T-cell (primary cell): ENCODE measurements at regions of chr21 and their contacts with region 1.

Region 1: GRCh38 chr21:41816220-41817165 is 49.6 kb upstream of the RIPK4 start:
- DNase-seq: peak in 32 of 35 experiments; percentile 31 to 73 (median 49)
- ATAC-seq: peak; percentile 58 to 82 (median 77)
- H3K4me3 ChIP-seq: no peak overlapping the region
- H3K4me3 Mint-ChIP-seq: no peak overlapping the region
- H3K27ac ChIP-seq: no peak overlapping the region
- H3K27ac Mint-ChIP-seq: peak overlapping the region in 1 of 2 donors; percentile 30
- H3K4me1 ChIP-seq: no peaks in the 10 kb centered on the region
- H3K4me1 Mint-ChIP-seq: peaks cover 6 to 10% (median 7%) of the 10 kb centered on the region in 3 donors
- H3K27me3 ChIP-seq: no peaks in the 10 kb centered on the region
- H3K27me3 Mint-ChIP-seq: no peaks in the 10 kb centered on the region

Region 2: GRCh38 chr21:41283211-41283818 is 533.2 kb before region 1 on chr21:
- CTCF ChIA-PET with region 1: interaction called in 1 of 2 experiments, 12 read pairs
- POLR2A ChIA-PET with region 1: no interaction called
- DNase-seq: peak in 32 of 35 experiments; percentile 10 to 82 (median 36)
- ATAC-seq: peak; percentile 81 to 94 (median 92)
- H3K4me3 ChIP-seq: no peak overlapping the region
- H3K4me3 Mint-ChIP-seq: no peak overlapping the region
- H3K27ac ChIP-seq: no peak overlapping the region
- H3K27ac Mint-ChIP-seq: peak overlapping the region in 1 of 2 donors; percentile 51
- H3K4me1 ChIP-seq: no peaks in the 10 kb centered on the region
- H3K4me1 Mint-ChIP-seq: no peaks in the 10 kb centered on the region
- H3K27me3 ChIP-seq: peaks cover 6 to 15% of the 10 kb centered on the region in 2 experiments
- H3K27me3 Mint-ChIP-seq: peaks cover 18 to 26% of the 10 kb centered on the region in 2 donors

Region 3: DNA sequence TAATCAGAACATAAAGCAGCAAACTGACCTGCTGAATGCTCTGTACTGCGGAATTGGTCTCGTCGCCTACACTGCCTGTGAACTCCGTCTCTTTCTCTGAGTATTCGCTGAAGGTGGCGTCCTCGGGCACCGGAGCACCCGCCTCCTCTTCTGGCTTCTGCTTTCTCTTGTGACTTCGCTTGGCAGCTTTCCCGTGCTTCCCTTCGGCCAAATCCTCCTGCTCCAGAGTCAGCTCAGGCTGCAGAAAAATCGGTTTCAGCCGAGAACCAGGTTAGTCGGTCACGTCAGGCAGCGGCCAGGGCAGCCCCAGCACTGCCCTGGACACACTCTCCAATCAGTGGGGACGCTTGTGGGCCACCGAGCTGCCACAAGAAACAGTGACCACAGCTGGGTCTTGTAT is 13.8 kb before region 1 on chr21:
- CTCF ChIA-PET with region 1: no interaction called
- POLR2A ChIA-PET with region 1: no interaction called
- DNase-seq: no peak
- ATAC-seq: no peak
- H3K4me3 ChIP-seq: no peak overlapping the region
- H3K4me3 Mint-ChIP-seq: no peak overlapping the region
- H3K27ac ChIP-seq: no peak overlapping the region
- H3K27ac Mint-ChIP-seq: no peak overlapping the region
- H3K4me1 ChIP-seq: no peaks in the 10 kb centered on the region
- H3K4me1 Mint-ChIP-seq: peaks cover 0 to 4% (median 0%) of the 10 kb centered on the region in 3 donors
- H3K27me3 ChIP-seq: no peaks in the 10 kb centered on the region
- H3K27me3 Mint-ChIP-seq: no peaks in the 10 kb centered on the region

Region 4: GRCh38 chr21:41895643-41896493 is 79.4 kb after region 1 on chr21:
- CTCF ChIA-PET with region 1: no interaction called
- POLR2A ChIA-PET with region 1: no interaction called
- DNase-seq: peak in 34 of 35 experiments; percentile 29 to 69 (median 52)
- ATAC-seq: peak; percentile 97 to 99 (median 98)
- H3K4me3 ChIP-seq: no peak overlapping the region
- H3K4me3 Mint-ChIP-seq: peak overlapping the region; percentile 25 to 42 (median 39)
- H3K27ac ChIP-seq: no peak overlapping the region
- H3K27ac Mint-ChIP-seq: peak overlapping the region; percentile 83 to 89
- H3K4me1 ChIP-seq: peaks cover 3 to 19% of the 10 kb centered on the region in 2 experiments
- H3K4me1 Mint-ChIP-seq: peaks cover 20 to 34% (median 31%) of the 10 kb centered on the region in 3 donors
- H3K27me3 ChIP-seq: no peaks in the 10 kb centered on the region
- H3K27me3 Mint-ChIP-seq: no peaks in the 10 kb centered on the region

Region 5: DNA sequence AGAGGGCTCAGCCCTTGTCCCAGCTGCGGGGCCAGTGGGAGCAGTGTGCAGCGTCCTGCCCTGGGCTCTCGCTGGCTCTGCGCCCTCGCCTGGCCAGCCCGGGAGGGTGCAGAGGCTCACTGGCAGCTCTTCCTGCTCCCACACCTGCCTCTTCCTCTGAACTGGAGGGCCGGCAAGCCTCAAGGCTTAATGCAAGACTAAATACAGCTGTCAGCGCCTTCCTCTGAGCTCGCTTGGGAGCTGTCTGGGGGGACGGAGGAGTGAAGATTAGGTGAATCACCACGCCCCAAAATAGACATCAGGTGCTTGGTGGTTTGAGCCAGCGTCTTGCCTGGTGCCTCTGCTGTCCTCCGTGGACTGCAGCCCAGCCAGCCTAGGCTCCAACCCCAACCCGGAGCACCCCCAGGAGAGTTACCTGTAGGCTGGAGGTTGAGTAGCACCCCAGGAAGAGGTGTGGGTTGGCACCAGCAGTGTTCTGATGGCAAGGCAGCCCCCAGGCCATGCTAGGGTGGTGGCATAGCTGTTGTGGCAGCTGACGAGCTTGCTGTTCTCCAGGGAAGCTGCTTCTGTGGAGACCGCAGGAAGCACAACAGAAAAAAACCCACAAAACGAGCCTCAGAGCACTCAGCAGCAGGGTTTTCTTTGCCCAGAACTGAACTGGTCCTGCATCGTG is 291.5 kb after region 1 on chr21:
- CTCF ChIA-PET with region 1: interaction called in 1 of 2 experiments, 17 read pairs
- POLR2A ChIA-PET with region 1: no interaction called
- DNase-seq: peak in 33 of 35 experiments; percentile 19 to 80 (median 54)
- ATAC-seq: peak; percentile 82 to 99 (median 96)
- H3K4me3 ChIP-seq: peak overlapping the region; percentile 24 to 29
- H3K4me3 Mint-ChIP-seq: peak overlapping the region; percentile 32 to 62 (median 53)
- H3K27ac ChIP-seq: no peak overlapping the region
- H3K27ac Mint-ChIP-seq: peak overlapping the region; percentile 65 to 69
- H3K4me1 ChIP-seq: peaks cover 0 to 19% of the 10 kb centered on the region in 2 experiments
- H3K4me1 Mint-ChIP-seq: peaks cover 5 to 23% (median 12%) of the 10 kb centered on the region in 3 donors
- H3K27me3 ChIP-seq: peaks cover 0 to 43% of the 10 kb centered on the region in 2 experiments
- H3K27me3 Mint-ChIP-seq: peaks cover 0 to 6% of the 10 kb centered on the region in 2 donors

Region 6: DNA sequence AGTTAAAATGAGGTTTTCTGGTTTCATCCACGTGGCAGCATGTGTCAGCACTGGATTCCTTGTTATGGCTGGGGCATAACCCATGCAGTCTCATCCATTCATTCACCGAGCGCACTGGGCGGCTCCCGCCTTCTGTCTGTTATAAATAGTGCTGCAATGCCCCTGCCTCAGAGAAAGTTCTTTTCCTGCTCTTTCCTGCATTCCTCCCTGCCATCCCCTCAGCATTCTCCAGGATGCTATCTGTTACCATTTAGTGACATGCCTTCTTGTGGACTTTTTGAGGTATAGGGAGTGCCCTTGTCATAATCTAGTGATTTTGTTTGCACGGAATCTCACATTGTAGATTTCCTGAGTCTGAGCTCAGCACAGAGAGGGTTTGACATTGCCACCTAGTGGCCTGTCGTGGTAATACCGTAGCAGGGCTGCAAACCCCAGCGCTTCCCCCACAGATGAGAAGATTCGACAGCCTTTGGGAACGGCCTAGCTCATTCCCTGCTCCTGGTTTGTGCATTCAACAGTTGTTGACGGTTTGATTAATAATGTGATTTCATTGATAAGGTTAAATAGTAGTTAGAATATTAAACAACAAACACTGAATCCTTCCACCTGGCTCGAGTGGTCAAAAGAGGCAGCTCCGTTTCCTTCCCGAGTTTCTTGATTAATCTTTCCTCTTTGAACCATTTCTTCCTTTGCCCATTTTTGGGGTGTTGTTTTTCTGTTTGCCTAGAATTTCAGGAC is 300.9 kb after region 1 on chr21:
- CTCF ChIA-PET with region 1: interaction called, 6 to 37 read pairs
- POLR2A ChIA-PET with region 1: no interaction called
- DNase-seq: peak; percentile 29 to 86 (median 65)
- ATAC-seq: peak; percentile 86 to 91 (median 88)
- H3K4me3 ChIP-seq: peak overlapping the region in 1 of 2 donors; percentile 44
- H3K4me3 Mint-ChIP-seq: peak overlapping the region in 1 of 3 donors; percentile 58
- H3K27ac ChIP-seq: no peak overlapping the region
- H3K27ac Mint-ChIP-seq: peak overlapping the region in 1 of 2 donors; percentile 10
- H3K4me1 ChIP-seq: peaks cover 12 to 14% of the 10 kb centered on the region in 2 experiments
- H3K4me1 Mint-ChIP-seq: peaks cover 17 to 30% (median 25%) of the 10 kb centered on the region in 3 donors
- H3K27me3 ChIP-seq: peaks cover 0 to 71% of the 10 kb centered on the region in 2 experiments
- H3K27me3 Mint-ChIP-seq: peaks cover 38 to 68% of the 10 kb centered on the region in 2 donors